ENCODE measurements at regions of chr11 and their contacts with region 1.

Region 1: DNA sequence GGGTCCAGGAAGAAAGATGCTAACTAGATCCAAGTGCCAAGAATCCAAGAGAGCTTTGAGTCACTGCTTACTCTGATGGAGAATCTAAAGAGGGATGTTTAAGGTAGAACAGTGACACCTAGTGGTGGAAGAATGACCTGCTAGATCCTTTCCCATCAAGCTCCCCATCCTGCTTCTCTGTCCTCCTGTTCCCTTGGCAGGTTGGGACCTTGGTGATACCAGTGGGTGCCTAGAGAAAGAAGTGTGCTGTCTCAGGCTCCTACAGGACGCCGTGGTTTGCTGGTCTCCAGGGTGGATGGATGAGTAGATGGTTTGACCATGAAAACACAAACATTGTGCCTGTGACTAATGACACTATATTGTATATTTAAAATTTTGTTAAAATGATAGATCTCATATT is 383.7 kb downstream of the TMEM135 start:
- H3K4me3 Mint-ChIP-seq: no peak overlapping the region
- H3K27ac Mint-ChIP-seq: no peak overlapping the region
- H3K4me1 Mint-ChIP-seq: no peaks in the 10 kb centered on the region
- H3K27me3 Mint-ChIP-seq: no peaks in the 10 kb centered on the region

Region 2: DNA sequence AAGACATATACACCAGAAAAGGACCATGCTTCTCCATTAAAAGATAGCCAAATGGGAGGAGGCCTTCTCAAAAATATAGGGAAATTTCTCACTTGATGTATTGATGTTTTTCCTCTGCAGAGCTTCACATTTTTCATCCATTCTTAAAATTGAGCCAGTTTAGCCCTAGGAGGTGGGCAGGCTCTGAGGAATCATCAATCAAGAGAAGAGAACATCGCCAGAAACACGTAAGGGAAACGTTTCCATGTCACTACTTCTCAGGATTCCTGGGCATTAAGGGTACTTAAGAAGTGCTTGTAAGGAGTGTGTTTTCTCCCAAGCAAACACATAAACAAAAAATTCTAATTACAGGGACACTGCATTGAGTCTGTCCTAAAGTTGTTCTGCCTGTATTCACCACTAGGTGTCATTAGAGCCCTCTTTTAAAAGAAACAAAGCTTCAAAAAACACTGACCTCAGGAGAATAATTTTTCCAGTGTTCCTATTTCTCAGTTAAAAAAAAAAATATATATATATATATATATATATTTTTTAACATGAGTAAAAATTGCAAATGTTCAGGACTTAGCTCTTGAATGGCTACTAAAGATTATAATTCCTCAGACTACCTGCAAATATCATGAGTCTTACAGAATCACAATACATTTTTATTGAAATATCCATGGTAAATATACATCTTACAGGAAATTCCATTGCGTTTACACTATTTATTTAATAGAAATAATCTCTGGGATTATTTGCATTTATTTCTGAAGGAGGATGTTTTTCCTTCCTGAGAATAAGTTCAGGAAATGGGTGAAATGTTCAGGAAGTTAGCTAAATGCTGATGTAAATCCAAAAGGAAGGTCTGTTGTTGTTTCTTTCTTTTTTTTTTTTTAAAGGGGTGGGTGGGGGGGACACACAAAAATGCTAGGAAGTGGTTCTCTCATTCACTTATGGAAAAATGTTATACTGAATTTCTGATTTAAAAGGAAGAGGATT is 482.2 kb before region 1 on chr11:
- intact Hi-C with region 1: loop called (anchors 5 kb)
- H3K4me3 Mint-ChIP-seq: no peak overlapping the region
- H3K27ac Mint-ChIP-seq: no peak overlapping the region
- H3K4me1 Mint-ChIP-seq: peaks cover 5% of the 10 kb centered on the region
- H3K27me3 Mint-ChIP-seq: peaks cover 3% of the 10 kb centered on the region

Region 3: GRCh38 chr11:87324817-87325489 is 96.5 kb before region 1 on chr11:
- intact Hi-C with region 1: no loop called
- H3K4me3 Mint-ChIP-seq: no peak overlapping the region
- H3K27ac Mint-ChIP-seq: no peak overlapping the region
- H3K4me1 Mint-ChIP-seq: no peaks in the 10 kb centered on the region
- H3K27me3 Mint-ChIP-seq: no peaks in the 10 kb centered on the region

Region 4: DNA sequence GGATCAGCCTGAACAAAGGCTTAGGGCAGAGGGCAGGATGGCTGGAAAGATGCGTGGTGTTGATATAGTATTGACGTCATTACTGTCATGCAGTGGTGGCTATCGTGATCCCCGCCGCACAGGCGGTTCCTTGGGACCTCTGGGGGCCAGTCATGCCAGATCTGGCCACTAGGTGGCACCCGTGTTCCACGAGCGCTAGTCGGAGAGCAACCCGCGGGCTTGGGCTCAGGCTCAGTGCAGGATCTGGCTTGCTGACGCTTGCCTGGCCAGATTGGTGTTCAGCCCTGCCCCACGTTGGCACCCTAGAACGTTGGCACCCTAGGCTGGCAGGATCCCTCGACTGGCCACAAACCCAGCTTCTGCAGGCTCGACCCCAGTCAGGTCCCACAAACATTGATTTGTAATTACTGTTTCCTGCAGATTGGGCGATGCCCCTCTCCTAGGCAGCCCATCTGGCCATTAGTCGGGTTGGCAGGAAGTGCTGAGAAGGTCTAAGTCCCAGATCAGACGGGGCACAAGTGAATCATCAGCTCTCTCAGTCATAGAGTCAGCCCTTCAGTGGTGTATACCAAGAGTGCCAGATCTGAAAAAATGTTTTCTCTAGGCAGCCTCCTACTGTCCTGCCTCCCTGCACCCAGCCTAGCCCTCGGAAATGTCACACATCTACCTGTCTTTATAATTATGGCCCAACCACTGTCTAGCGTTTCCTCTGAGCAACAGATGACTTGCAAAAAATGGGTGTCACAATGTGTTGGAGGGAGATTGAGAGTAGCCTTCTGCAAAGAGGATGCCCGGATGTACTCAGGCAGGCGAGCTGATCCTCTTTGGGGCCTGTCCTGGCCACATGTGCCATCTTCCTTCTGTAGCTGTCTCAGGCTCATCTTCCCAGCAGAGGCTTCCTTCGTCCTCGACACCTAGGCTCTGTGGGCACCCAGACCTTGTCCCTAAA is 68.4 kb before region 1 on chr11:
- intact Hi-C with region 1: loop called (anchors 1 kb)
- H3K4me3 Mint-ChIP-seq: no peak overlapping the region
- H3K27ac Mint-ChIP-seq: no peak overlapping the region
- H3K4me1 Mint-ChIP-seq: peaks cover 12% of the 10 kb centered on the region
- H3K27me3 Mint-ChIP-seq: no peaks in the 10 kb centered on the region